Activated T-helper 1 cell treated with anti-CD3 and anti-CD28 coated beads, Interleukin-12 subunit alpha, Interleukin-12 subunit beta, Interleukin-2, Interleukin-4 antibody, amounts not matched to agents 30 ng/mL and 10 ng/mL and 1 ng/mL, durations not matched to agents 14 hours and 24 hours and 36 hours (primary cell): ENCODE measurements at regions of chr3 and their contacts with region 1.

Region 1: GRCh38 chr3:151203051-151203420 is at the start of gene GPR171:
- DNase-seq: peak; percentile 72
- H3K4me3 Mint-ChIP-seq: peak within 1 kb of the TSS; percentile 96
- H3K27ac Mint-ChIP-seq: peak within 1 kb of the TSS; percentile 99
- H3K4me1 Mint-ChIP-seq: peaks cover 73% of the 10 kb centered on the region
- H3K27me3 Mint-ChIP-seq: no peaks in the 10 kb centered on the region
- total RNA-seq, gene GPR171: 172 and 191 TPM in 2 replicates

Region 2: DNA sequence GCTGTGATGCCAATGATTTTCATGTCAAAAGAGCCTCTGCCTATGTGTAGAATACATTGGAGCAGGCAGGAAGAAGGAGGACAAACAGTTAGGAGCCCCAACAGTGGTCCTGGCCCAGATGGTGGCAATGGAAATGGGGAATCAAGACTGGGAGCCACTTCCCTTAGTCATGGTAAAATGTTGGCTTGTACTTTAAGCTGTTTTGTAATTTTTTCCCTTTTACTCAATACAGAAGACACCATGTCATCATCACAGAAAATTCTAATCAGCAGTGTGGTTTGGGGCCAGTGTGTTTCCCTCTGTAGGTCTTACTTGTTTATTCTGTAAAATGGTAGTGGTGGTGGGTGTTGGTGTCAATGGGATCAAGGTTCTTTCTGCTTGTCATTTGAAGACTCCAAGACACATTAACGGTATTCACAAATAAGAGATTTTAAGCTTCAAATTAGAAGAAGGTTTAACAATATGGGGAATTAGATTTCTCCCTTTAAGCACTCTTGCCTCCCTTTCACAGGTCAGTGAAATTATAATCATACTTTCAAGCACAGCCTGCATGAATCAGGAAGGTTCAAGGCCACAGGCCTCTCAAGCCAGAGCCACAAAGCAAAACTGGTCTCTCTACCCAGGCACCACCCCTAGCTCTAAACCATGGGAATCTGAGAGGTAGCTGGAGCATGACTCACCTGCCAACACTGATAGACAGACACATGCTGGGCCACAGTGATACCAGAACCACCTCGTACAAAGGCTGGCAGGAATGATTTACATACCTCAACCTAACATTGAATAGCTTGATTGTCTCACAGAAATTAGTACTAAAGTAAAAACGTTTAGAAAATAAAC is 464.9 kb before region 1 on chr3:
- intact Hi-C with region 1: loop called (anchors 1 kb)
- DNase-seq: no peak
- H3K4me3 Mint-ChIP-seq: peak overlapping the region; percentile 42
- H3K27ac Mint-ChIP-seq: peak overlapping the region; percentile 92
- H3K4me1 Mint-ChIP-seq: peaks cover 93% of the 10 kb centered on the region
- H3K27me3 Mint-ChIP-seq: no peaks in the 10 kb centered on the region

Region 3: GRCh38 chr3:151086484-151087456 is 116.3 kb before region 1 on chr3:
- intact Hi-C with region 1: loop called (anchors 5 kb)
- DNase-seq: peak; percentile 58
- H3K4me3 Mint-ChIP-seq: peak overlapping the region; percentile 85
- H3K27ac Mint-ChIP-seq: peak overlapping the region; percentile 27
- H3K4me1 Mint-ChIP-seq: peaks cover 4% of the 10 kb centered on the region
- H3K27me3 Mint-ChIP-seq: peaks cover 48% of the 10 kb centered on the region

Region 4: DNA sequence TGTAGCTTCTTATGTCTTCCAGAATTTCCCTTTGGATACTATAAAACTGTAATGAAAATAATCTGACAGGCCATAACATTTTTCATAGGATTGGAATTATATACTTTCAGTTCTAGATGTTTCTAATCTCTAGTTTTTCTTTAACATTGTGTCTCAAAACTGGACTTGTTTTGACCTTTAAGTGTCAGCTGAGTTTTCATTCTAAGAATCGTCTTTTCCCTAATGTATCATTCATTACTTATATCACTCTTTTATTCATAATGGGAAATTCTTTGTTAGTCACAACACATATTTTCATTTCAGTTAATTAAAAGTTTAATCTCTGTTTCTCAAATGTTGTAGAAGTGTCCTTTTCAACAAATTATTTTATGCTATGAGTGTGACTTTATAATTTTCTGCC is 11.9 kb before region 1 on chr3:
- intact Hi-C with region 1: loop called (anchors 1 kb)
- DNase-seq: no peak
- H3K4me3 Mint-ChIP-seq: peak overlapping the region; percentile 53
- H3K27ac Mint-ChIP-seq: peak overlapping the region; percentile 89
- H3K4me1 Mint-ChIP-seq: peaks cover 56% of the 10 kb centered on the region
- H3K27me3 Mint-ChIP-seq: no peaks in the 10 kb centered on the region

Region 5: DNA sequence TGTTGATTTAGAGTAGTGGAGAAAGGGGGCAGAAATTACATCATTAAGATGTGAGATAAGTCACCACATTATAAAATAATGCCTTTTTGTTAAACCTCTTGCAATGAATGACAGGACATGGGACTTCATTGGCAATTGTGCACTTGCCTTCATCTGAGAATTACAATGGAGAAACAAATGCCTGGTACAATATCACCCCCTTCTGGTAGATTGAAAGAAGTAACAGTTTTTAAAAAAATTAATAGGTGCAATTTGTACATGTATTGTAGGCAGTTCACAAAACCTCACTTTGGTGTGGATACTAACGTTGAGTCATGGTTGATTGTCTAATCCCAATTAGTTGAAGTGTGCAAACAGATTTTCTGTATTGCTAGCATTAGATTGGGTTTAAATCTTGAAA is 79.9 kb after region 1 on chr3:
- intact Hi-C with region 1: loop called (anchors 1 kb)
- DNase-seq: no peak
- H3K4me3 Mint-ChIP-seq: no peak overlapping the region
- H3K27ac Mint-ChIP-seq: peak overlapping the region; percentile 38
- H3K4me1 Mint-ChIP-seq: peaks cover 56% of the 10 kb centered on the region
- H3K27me3 Mint-ChIP-seq: no peaks in the 10 kb centered on the region

Region 6: GRCh38 chr3:152268555-152269425 is 1065.8 kb after region 1 on chr3 and contains the start of gene MBNL1:
- intact Hi-C with region 1: loop called (anchors 5 kb)
- DNase-seq: peak; percentile 81
- H3K4me3 Mint-ChIP-seq: peak within 1 kb of the TSS; percentile 90
- H3K27ac Mint-ChIP-seq: peak within 1 kb of the TSS; percentile 94
- H3K4me1 Mint-ChIP-seq: peaks cover 74% of the 10 kb centered on the region
- H3K27me3 Mint-ChIP-seq: no peaks in the 10 kb centered on the region
- total RNA-seq, gene MBNL1: 295 and 308 TPM in 2 replicates